Activated T-helper 2 cell treated with anti-CD3 and anti-CD28 coated beads, Interferon-gamma antibody, Interleukin-2, Interleukin-4, amounts not matched to agents 10 μg/mL and 5 μg/mL and 100 μg/mL, durations not matched to agents 14 hours and 24 hours and 36 hours (primary cell): ENCODE measurements at regions of chr2 and their contacts with region 1.

Region 1: GRCh38 chr2:70142590-70143313 is 48.1 kb downstream of the C2orf42 start:
- DNase-seq: peak; percentile 100
- H3K4me3 Mint-ChIP-seq: peak overlapping the region; percentile 84
- H3K27ac Mint-ChIP-seq: peak overlapping the region; percentile 97
- H3K4me1 Mint-ChIP-seq: peaks cover 49% of the 10 kb centered on the region
- H3K27me3 Mint-ChIP-seq: no peaks in the 10 kb centered on the region

Region 2: DNA sequence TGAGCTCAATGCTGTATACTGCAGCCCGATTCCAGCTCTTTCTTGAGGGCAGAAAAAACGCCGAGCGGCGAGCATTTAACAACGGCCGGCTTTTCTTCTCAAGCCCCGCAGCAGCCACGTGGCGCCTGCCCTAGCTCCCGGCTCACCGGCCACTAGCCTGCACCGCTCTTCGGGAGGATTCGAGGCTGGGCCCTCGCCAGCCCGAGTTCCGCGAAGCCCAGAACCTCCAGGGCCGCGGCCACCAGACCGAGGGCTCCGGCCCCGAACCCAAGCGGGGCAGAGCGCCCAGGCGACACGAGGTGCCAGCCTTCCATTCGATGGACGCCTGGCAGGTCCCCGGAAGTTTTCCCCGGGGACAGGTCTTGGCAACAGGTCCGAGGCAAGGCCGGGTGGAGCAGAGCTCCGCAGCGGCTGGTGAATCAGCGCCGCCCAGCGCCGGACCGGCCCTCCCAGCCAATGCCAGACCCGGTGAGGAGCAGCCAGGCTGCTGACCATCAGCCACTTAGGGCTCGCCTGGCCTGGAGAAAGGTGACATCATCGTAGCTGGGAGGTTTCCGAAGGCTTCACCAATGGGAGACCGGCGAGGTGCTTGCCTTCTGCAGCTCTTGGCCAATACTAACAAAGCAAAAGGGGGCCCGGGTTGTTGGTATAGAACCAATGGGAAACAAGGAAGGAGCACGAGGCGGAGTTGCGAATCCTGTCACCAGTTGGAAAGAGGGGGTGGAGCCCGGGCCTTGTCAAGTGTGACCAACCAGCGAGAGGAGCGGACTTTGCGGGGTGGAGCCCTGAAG is 228.4 kb before region 1 on chr2:
- intact Hi-C with region 1: loop called (anchors 1 kb)
- DNase-seq: peak; percentile 100
- H3K4me3 Mint-ChIP-seq: peak overlapping the region; percentile 83
- H3K27ac Mint-ChIP-seq: peak overlapping the region; percentile 91
- H3K4me1 Mint-ChIP-seq: peaks cover 36% of the 10 kb centered on the region
- H3K27me3 Mint-ChIP-seq: no peaks in the 10 kb centered on the region

Region 3: GRCh38 chr2:70086838-70087701 is 55.7 kb before region 1 on chr2 and contains the start of gene PCBP1:
- intact Hi-C with region 1: loop called (anchors 1 kb)
- DNase-seq: peak; percentile 92
- H3K4me3 Mint-ChIP-seq: peak within 1 kb of the TSS; percentile 98
- H3K27ac Mint-ChIP-seq: peak within 1 kb of the TSS; percentile 99
- H3K4me1 Mint-ChIP-seq: peaks cover 53% of the 10 kb centered on the region
- H3K27me3 Mint-ChIP-seq: no peaks in the 10 kb centered on the region
- total RNA-seq, gene PCBP1: 433 and 442 TPM in 2 replicates

Region 4: DNA sequence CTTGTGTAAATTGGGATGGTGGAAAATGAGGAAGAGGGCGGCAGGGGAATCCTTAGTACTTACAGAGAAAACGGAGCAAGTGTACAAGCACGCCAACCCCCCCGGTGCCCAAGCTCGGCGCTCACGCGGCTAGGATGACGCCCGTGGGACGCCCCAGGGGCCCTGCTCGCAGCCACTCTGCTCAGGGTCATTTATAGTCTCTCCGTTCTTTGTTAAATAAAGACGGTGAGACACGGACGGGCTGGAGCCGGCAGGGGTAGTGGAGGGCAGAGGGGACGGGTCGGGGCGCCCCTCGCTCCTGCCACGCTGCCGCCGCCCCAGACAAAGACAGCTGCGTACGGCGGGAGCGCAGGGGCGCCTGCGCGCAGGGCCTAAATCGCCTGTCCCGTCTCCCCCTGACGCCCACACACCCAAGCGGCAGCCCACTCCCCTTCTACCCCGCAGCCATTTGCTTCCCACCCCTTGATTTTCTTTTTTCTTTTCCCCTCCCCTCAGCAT is 17.7 kb before region 1 on chr2:
- intact Hi-C with region 1: loop called (anchors 1 kb)
- DNase-seq: peak; percentile 55
- H3K4me3 Mint-ChIP-seq: peak overlapping the region; percentile 90
- H3K27ac Mint-ChIP-seq: peak overlapping the region; percentile 98
- H3K4me1 Mint-ChIP-seq: peaks cover 57% of the 10 kb centered on the region
- H3K27me3 Mint-ChIP-seq: no peaks in the 10 kb centered on the region

Region 5: GRCh38 chr2:70190418-70191243 is 47.9 kb after region 1 on chr2 and contains the start of gene C2orf42:
- intact Hi-C with region 1: loop called (anchors 1 kb)
- DNase-seq: peak; percentile 94
- H3K4me3 Mint-ChIP-seq: peak within 1 kb of the TSS; percentile 96
- H3K27ac Mint-ChIP-seq: peak within 1 kb of the TSS; percentile 98
- H3K4me1 Mint-ChIP-seq: peaks cover 18% of the 10 kb centered on the region
- H3K27me3 Mint-ChIP-seq: peaks cover under 1% of the 10 kb centered on the region
- total RNA-seq, gene C2orf42: 22.1 and 24.7 TPM in 2 replicates